Pancreas (tissue), 10 donors: ENCODE measurements at regions of chr19 and their contacts with region 1.

Region 1: GRCh38 chr19:53365134-53365898 is at the start of gene ZNF525:
- DNase-seq: peak; percentile 91 to 99 (median 96)
- ATAC-seq: peak; percentile 99 to 100 (median 100)
- H3K4me3 ChIP-seq: peak within 1 kb of the TSS; percentile 36 to 84 (median 43)
- H3K27ac ChIP-seq: peak within 1 kb of the TSS in 3 of 4 donors; percentile 49 to 72 (median 64)
- H3K4me1 ChIP-seq: peaks cover 0 to 3% (median 0%) of the 10 kb centered on the region in 3 donors
- H3K27me3 ChIP-seq: no peaks in the 10 kb centered on the region
- CTCF ChIP-seq: peak in 3 of 4 donors; percentile 6 to 44 (median 36)
- total RNA-seq, gene ZNF525: 4.7 to 13.7 (median 7.5) TPM

Region 2: GRCh38 chr19:53195265-53195903 is 169.9 kb before region 1 on chr19:
- intact Hi-C with region 1: loop called in 1 of 3 experiments (anchors 10 kb)
- DNase-seq: peak in 5 of 6 donors; percentile 65 to 87 (median 72)
- ATAC-seq: peak; percentile 43 to 78 (median 71)
- H3K4me3 ChIP-seq: no peak overlapping the region
- H3K27ac ChIP-seq: peak overlapping the region in 1 of 4 donors; percentile 12
- H3K4me1 ChIP-seq: no peaks in the 10 kb centered on the region
- H3K27me3 ChIP-seq: no peaks in the 10 kb centered on the region
- CTCF ChIP-seq: peak; percentile 56 to 83 (median 72)

Region 3: GRCh38 chr19:53409505-53410204 is 44.3 kb after region 1 on chr19:
- intact Hi-C with region 1: no loop called
- DNase-seq: no peak
- ATAC-seq: no peak
- H3K4me3 ChIP-seq: no peak overlapping the region
- H3K27ac ChIP-seq: no peak overlapping the region
- H3K4me1 ChIP-seq: no peaks in the 10 kb centered on the region
- H3K27me3 ChIP-seq: no peaks in the 10 kb centered on the region
- CTCF ChIP-seq: no peak

Region 4: GRCh38 chr19:53634776-53635175 is 269.5 kb after region 1 on chr19:
- intact Hi-C with region 1: no loop called
- DNase-seq: no peak
- ATAC-seq: no peak
- H3K4me3 ChIP-seq: no peak overlapping the region
- H3K27ac ChIP-seq: no peak overlapping the region
- H3K4me1 ChIP-seq: no peaks in the 10 kb centered on the region
- H3K27me3 ChIP-seq: no peaks in the 10 kb centered on the region
- CTCF ChIP-seq: no peak